Posterior vena cava (tissue), 2 donors: ENCODE measurements at regions of chr3 and their contacts with region 1.

Region 1: GRCh38 chr3:72591522-72592421 is 256.5 kb downstream of the SHQ1 start:
- DNase-seq: peak; percentile 85

Region 2: DNA sequence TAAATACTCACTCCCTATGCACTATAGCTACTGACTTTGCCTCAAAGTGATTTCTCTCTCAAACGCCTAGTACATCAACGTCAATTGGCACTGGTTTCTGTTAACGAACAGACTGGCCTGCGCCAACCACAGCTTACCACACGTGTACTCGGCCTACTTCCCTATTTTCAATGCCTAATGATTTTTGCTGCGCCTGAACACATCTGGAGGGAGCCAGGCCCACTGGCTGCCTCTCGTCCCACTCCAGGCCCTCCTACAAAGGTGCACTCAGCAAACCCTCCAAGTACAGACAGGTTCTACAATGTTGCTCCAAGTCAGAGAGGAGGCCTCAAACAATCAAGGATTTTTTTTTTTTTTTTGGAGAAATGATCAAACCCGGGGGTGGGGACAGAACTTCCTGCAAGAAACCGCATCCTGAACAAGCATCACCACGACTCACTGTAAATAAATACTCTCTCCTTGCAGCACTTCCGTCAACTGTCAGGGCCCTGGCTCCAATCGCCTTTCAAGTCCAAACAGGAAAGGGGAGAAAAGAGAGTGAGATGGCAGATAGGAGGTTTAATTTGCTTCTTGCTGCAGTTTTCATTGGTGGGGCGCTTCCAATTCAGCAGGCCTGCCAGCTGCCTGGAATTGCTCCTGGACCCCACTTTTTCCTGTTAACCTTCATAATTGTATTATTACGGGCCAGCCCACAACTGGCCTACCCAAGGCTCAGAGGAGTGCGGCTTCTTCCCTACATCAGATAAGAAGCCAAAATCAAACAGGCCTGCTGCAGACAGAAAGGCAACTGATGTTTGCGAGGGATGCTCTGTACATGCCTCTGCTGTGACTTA is 1147.5 kb before region 1 on chr3:
- intact Hi-C with region 1: loop called in 1 of 2 experiments (anchors 5 kb)
- DNase-seq: peak; percentile 86

Region 3: DNA sequence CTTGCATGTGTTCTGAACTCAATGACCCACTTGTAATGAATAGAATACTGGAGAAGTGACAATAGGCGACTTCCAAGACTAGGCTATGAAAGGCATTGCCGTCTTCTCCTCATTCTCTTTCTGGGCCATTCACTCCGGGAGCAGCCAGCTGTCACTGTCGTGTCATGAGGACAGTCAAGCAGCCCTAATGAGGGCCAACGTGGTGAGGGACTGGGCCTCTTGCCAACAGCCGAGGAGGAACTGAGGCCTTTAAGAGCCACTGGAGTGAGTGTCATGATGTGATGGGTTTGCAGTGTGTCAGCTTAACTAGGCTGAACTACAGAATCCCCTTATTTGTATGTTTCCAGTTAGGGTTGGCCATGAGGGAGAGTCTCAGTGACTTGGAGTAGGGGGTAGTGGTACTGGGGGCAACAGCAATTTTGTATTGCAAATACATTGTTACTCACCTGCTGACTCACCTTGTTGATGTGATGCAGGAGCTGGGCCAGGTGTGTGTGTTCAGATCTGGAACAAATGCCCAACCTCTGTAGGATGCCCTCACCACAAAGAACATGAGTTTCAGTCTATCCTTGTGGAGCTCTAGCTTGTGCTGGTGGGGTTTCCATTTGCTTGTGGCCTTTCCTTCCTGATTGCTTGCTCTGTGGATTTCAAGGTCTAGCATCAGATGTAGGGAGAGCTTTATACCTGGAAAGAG is 618.3 kb before region 1 on chr3:
- intact Hi-C with region 1: no loop called
- DNase-seq: peak; percentile 89

Region 4: DNA sequence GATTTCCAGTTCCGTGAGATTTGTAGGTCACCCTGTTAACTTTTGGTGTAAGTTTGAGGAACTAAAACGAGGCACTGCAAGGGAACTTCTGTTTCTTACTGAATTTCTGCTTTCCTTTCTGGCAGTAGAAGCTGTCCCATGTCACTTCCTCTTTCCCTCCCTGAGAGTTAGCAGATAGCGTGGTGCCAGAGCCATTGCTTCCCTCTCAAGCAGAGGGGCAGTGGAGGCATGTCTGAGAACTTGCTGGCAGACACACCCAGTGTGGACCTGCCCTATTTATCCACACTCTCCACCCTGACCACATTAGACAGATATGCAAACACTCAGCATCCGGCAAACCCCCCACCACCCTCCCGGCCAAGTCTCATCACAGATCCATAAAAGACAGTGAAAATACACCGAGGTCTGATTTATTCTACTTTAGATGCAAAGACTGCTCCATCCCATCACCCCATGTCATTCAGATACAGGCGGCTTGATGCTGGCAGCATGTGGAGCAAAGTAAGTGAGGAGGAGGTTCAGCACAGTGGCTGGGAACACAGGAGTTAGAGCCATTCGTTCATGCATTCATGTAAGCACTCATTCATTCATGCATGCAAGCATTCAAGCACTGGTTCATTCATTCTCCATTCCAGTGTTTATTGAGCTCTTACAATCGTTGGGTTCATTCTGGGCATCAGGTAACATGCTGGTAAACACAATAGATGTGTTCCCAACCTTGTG is 68.2 kb before region 1 on chr3:
- intact Hi-C with region 1: no loop called
- DNase-seq: peak; percentile 76

Region 5: DNA sequence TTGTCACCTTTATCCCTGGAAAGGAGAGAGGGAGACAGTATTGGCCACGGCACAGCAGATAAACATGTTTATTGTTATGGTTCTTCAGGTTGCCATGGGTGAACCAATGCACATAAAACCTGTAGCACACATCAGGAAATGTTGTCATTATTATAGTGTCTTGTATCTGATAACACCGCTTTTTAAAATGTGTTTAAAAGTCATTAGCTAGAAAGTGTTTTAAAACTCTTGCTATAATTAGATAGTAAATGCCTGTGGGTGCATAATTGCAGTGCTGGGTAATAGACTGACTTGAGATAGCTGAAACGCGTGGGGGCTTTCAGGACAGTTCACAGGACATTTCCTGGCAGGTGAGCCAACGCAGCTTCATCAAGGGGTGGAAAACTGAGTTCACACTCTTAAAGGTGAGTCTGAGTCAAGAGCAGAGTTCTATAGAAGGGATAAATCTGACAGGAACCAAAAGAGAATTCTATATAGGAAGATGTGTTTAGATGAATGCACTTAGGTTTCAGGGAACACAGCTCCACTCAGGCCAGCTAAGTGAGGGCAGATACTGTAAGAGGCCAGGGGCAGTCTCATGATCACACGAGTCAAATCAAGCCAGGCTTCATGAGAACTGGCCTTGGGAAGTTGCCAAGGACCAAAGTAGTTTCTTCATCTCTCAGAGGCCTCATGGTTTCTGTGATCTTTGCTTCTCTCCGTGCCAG is 369.2 kb after region 1 on chr3:
- intact Hi-C with region 1: no loop called
- DNase-seq: no peak